Ovary (tissue), 10 donors: ENCODE measurements at regions of chr3 and their contacts with region 1.

Region 1: GRCh38 chr3:129596194-129597086 is 10.0 kb downstream of the PLXND1 start:
- DNase-seq: peak; percentile 87 to 93 (median 89)
- H3K4me3 ChIP-seq: no peak overlapping the region
- H3K27ac ChIP-seq: peak overlapping the region; percentile 30 to 74
- H3K4me1 ChIP-seq: peaks cover 53% of the 10 kb centered on the region
- H3K27me3 ChIP-seq: no peaks in the 10 kb centered on the region
- CTCF ChIP-seq: no peak
- EP300 ChIP-seq: no peak
- POLR2A ChIP-seq: no peak

Region 2: DNA sequence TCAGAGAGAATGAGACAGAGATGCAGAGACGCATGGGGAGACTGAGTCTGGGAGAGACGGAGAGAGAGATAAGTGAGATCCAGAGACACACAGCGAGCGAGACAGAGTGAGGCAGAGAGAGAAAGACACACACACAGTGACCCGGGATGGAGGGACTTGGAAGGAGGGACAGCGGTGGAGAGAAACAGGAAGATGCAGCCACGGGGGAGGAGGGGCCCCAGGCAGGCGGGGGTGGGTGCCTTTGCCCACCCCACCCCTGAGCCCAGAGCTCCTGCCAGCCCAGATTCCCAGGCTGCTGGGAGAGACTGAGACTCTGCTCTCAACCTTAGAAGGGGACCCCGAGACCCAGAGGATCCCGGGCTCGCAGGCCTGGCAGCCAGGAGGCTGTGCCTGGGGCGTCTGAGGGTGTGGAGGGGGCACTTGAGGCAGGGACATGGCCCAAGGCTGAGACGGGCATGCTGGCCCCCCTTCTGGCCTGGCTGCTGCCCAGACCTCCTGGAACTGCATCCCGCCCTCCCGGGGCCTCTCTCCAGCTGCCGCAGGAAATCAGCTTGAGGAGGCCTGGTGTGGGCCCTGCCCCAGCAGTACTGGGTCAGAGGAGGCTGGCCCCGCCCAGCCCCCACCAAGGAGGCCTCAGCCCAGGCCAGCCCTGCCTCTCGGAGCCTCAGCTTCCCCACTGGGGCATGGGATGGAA is 35.4 kb before region 1 on chr3:
- intact Hi-C with region 1: loop called in 1 of 4 experiments (anchors 5 kb)
- DNase-seq: peak; percentile 91 to 95 (median 92)
- H3K4me3 ChIP-seq: peak overlapping the region; percentile 8
- H3K27ac ChIP-seq: peak overlapping the region; percentile 82 to 92
- H3K4me1 ChIP-seq: peaks cover 15% of the 10 kb centered on the region
- H3K27me3 ChIP-seq: no peaks in the 10 kb centered on the region
- CTCF ChIP-seq: no peak
- EP300 ChIP-seq: no peak
- POLR2A ChIP-seq: no peak